Mucosa of descending colon (tissue), 3 donors: ENCODE measurements at regions of chr1 and their contacts with region 1.

Region 1: DNA sequence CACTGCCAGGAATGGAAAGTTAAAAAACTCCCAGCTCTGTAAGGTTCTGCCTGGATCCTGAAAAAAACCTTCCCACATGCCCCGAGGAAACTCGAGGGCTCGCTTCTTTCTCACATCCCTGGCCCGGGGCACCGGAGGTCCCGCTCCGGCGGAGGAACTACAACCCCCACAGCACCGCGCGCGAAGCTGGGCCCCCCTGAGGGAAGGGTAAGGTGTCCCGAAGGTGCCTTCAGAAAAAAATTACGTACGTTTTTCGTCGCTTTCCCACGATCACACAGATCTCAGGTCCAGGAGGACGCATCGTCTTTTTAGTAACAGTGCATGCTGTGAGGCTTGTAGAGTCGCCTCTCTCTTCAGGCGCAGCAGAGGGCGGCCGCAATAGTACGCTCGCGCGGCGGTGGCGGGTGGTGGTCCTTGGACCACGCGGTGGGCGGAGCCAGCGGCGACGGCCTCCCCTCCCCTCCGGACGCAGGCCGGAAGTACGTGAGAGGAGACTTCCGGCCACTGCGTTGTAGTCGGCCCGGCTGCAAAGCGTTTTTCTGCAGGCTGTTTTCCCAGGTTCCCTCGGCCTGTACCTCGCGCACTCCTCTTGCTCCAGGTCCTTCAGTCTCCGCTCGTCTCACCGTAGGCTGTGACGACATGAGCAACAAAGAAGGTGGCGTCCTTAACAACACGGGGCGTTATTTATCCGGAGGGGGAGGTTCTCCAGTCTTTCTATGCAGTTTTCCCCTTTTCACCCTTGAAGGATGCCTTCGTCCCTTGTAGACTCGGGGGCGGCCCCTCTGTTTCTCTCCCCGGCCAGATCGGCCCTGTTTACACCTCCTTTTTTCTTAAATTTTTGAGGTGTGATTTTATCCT is at the start of gene TSNAX:
- DNase-seq: peak; percentile 93 to 95 (median 95)
- ATAC-seq: peak; percentile 100
- H3K4me3 ChIP-seq: peak within 1 kb of the TSS; percentile 29
- H3K4me1 ChIP-seq: peaks cover 28% of the 10 kb centered on the region
- CTCF ChIP-seq: no peak
- total RNA-seq, gene TSNAX: 22.0 to 33.2 (median 31.4) TPM

Region 2: DNA sequence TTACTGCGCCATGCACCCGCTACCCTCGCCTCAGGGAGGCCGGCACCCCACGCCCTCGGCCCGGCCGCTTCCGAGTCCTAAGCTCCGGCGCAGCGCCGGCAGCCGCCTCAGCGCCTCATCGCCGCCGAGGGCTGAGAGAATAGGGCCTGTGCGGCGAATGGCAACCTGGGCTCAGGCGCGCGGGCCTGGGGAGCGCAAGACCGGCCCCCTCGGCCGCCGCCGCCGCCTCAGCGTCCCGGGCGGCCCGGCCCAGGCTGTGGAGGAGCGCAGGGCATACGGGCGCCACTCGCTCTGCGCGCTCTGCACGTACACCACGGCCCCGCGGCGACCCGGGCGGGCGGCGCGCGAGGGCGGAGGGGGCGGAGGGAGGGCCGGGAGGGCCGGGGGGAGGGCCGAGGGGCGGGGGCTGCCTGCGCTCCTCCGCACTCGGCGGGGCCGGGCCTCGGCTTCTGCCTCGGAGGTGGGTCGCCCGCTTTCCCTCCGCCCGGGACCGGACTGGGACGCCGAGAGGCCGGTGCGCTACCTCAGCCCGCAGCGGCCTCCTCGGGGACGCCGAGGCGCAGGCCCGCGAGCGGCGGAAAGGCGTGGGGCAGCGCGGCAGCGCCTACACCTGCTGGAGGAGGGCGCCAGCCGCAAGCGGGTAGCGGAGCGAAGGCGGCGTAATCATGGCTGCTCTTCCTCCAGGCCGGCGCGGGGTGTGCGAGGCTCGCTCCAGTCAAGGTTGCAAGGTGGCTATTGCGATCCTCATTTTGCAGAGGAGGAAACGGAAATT is 106.2 kb before region 1 on chr1 and contains the start of gene EGLN1:
- intact Hi-C with region 1: loop called (anchors 5 to 10 kb)
- DNase-seq: peak; percentile 88 to 94 (median 92)
- ATAC-seq: peak; percentile 90
- H3K4me3 ChIP-seq: peak within 1 kb of the TSS; percentile 83
- H3K4me1 ChIP-seq: peaks cover 20% of the 10 kb centered on the region
- CTCF ChIP-seq: no peak
- total RNA-seq, gene EGLN1: 49.3 to 61.1 (median 55.0) TPM